BJ (cell line): ENCODE measurements at regions of chr2 and their contacts with region 1.

Region 1: DNA sequence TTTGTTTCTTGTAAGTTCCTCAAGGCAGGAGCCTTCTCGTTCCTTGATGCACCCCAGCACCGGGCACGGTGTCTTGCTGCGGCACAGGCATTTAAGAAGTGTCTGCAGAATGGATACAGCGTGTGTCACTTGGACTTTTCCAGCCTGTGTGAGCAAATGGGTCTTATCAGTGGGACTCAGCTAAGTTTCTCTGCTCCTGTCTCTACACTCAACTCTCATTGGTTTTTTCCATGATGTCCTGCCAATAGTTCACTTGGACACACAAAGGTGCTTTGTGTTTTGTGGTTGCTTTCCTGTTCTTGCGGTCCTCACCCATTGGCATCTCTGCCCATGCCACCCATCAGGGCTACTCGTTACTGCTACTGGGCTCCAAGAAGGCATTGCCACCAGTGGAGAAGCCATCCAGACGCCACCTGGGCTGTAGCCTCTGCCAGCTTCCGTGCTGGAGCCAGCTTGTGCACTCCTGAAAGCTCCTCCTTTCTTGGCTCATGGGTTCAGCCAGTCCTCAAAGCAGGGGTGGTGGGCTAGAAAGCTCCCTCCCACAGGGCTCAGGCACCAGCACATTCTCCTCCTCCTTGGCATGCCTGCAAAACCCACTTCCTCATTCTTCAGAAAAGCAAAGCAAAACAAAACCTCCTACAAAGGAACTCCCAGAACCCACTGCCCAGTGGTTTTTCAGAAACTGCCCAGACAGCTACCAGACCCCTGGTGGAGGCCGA is 41.4 kb downstream of the IL1R2 start:
- DNase-seq: no peak
- H3K4me3 ChIP-seq: no peak overlapping the region
- H3K27me3 ChIP-seq: no peaks in the 10 kb centered on the region
- CTCF ChIP-seq: no peak; the same call in 1 of the 2 replicates

Region 2: GRCh38 chr2:102063941-102064678 is 30.9 kb after region 1 on chr2:
- CTCF ChIA-PET with region 1: interaction called, 13 read pairs
- POLR2A ChIA-PET with region 1: interaction called, 8 read pairs
- DNase-seq: peak; percentile 95
- H3K4me3 ChIP-seq: no peak overlapping the region
- H3K27me3 ChIP-seq: no peaks in the 10 kb centered on the region
- CTCF ChIP-seq: no peak